PC-3 (cell line): ENCODE measurements at regions of chr7 and their contacts with region 1.

Region 1: DNA sequence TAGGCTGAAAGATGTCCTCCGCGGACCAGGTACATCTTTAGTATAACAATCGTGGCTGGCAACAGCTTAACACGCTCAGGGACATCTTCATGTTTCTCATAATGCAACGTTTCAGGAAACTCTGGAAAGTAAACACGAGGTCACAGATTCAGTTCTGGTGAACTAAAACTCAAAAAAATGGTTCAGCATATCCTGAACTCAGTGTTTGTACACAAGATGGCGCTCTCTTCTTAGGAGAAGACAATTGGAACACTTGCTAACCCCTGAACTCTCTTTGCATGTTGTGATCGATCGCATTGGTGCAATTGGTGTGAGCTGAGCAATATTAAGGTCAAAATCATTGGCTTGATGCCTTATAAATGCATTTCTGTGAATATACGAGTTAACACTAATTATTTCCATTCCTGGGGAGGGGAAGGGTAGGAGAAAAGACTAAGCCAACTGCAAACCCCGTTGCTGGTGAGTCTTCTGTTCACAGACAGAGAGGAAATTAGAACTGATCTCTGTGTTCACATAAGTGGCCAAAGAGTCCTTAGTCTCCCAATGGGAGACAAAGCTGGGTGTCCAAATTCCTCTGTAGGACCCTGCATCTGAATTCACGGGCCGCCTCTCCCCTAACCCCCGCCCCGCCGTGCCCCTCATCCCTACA is 52.6 kb upstream of the FAM180A start:
- DNase-seq: peak; percentile 80
- ATAC-seq: peak; percentile 64
- H3K4me3 ChIP-seq: 0 out of 2 replicates have a peak overlapping the region, but pooled peaks have one; percentile 6
- H3K27ac ChIP-seq: no peak overlapping the region
- H3K4me1 ChIP-seq: no peaks in the 10 kb centered on the region
- H3K27me3 ChIP-seq: no peaks in the 10 kb centered on the region
- CTCF ChIP-seq: peak; percentile 88

Region 2: DNA sequence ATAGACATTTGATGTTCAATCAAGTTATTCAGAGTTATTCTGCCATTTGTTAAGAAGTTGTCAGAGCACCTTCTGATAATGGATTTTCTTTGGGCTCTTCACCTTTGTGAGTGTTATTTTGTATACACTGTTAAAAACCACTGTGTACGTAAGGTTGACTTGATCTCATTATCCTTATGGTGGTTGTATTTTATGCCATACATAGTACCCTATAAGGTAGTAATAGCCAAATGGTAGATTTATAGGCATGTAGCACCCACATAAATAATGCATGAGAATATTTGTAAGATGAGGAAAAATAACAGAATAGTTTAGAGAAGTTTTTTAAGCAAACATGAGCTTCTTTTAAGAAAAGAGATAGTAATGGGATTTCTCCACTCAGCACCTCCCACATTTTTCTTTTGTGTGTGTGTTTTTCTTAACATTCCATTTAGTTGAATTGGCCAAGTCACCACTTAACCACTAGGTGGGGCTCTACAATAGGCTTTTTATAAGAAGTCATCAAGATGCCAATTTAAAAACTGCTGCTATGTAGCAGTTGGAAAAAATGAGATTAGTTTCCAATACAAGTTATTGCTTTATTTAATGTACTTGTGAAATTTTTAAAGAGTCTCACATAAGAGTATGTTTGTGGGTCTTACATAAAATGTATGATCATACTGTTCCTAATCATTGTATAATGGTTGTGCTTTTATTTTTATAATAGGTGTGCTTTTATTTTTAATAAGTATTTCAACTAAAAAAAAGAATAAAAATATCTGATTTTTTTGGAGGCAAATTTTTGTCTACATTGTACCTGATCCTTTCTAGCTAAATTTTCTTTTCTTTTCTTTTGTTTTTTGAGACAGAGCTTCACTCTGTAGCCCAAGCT is 180.0 kb before region 1 on chr7:
- CTCF ChIA-PET with region 1: no interaction called
- POLR2A ChIA-PET with region 1: no interaction called
- intact Hi-C with region 1: loop called (anchors 2 kb)
- DNase-seq: peak; percentile 89
- ATAC-seq: peak; percentile 90
- H3K4me3 ChIP-seq: no peak overlapping the region
- H3K27ac ChIP-seq: no peak overlapping the region
- H3K4me1 ChIP-seq: no peaks in the 10 kb centered on the region; the same call in 1 of the 2 replicates
- H3K27me3 ChIP-seq: no peaks in the 10 kb centered on the region
- CTCF ChIP-seq: peak; percentile 92

Region 3: DNA sequence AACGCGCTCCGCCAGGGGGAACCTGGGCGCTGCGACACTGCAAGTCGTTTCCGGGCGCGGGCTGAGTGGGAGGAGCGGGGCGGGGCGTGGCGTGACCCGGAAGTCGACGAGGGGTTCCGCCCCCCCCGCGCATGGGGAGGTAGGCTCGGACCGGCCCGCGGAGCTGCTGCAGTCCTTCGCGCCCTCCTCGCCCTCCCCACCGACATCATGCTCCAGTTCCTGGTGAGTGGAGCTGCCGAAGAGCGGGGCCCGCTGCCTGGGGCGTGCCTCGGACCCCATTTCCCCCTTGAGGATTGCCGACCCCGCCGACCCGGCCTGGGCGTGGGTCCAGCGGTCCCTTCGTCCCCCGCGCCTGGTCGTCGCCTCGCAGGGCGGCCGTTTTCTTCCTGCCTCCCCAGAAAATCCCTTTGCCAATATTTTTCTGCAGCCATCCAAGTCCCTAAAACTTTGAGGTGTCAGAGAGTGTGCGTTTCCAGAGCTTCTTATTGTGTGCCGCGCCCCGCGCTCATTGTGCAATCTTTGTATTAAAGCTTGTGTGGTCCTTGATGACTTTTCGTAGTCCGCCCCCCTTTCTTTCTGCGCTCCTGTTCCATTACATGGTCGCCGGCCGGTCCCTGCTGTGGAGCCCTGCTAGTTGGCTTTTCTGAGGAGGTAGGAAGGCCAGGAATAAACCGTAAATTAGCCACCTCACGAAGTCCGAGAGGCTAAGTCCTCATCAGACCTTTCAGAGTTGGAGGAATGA is 138.6 kb before region 1 on chr7 and contains the start of gene STMP1:
- CTCF ChIA-PET with region 1: no interaction called
- POLR2A ChIA-PET with region 1: no interaction called
- intact Hi-C with region 1: loop called (anchors 2 kb)
- DNase-seq: peak; percentile 92
- ATAC-seq: peak; percentile 87
- H3K4me3 ChIP-seq: peak within 1 kb of the TSS; percentile 81
- H3K27ac ChIP-seq: peak within 1 kb of the TSS; percentile 90
- H3K4me1 ChIP-seq: peaks cover 15% of the 10 kb centered on the region
- H3K27me3 ChIP-seq: no peaks in the 10 kb centered on the region
- CTCF ChIP-seq: peak; percentile 56
- total RNA-seq, gene STMP1: 7.1 and 8.8 TPM in 2 replicates

Region 4: GRCh38 chr7:135697276-135698049 is 103.7 kb before region 1 on chr7:
- CTCF ChIA-PET with region 1: no interaction called
- POLR2A ChIA-PET with region 1: no interaction called
- intact Hi-C with region 1: no loop called
- DNase-seq: no peak
- ATAC-seq: no peak
- H3K4me3 ChIP-seq: no peak overlapping the region
- H3K27ac ChIP-seq: no peak overlapping the region
- H3K4me1 ChIP-seq: no peaks in the 10 kb centered on the region; the same call in 1 of the 2 replicates
- H3K27me3 ChIP-seq: no peaks in the 10 kb centered on the region
- CTCF ChIP-seq: no peak

Region 5: DNA sequence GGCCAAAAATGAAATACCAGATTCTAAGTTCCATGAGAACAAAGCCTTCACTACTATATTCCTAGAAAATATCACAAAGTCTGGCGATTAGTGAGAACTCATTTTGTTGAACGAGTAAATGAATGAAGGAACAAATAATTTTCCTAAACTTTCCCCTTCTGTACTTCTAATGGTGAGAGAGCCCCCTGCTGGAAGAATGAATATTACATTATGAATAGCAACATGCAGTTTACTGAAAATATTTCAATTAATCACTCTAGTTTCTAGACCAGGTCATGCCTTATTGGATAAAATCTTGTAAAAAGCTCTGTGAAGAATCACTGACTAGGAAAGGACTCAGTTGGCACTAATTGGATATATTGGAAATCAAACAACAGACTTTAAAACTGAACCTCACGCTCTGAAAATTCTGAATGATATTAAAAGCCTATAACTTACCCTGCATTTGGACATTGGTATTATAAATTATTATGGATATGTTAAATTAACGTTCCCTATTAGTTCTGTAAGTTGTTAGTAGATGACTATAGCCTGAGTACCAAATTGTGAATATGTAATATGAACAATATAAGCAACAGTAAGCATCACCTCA is 208.4 kb after region 1 on chr7:
- CTCF ChIA-PET with region 1: interaction called, 5 read pairs
- POLR2A ChIA-PET with region 1: no interaction called
- intact Hi-C with region 1: loop called (anchors 1 kb)
- DNase-seq: peak; percentile 76
- ATAC-seq: 0 out of 2 replicates have a peak, but pooled peaks have one; percentile 37
- H3K4me3 ChIP-seq: no peak overlapping the region
- H3K27ac ChIP-seq: no peak overlapping the region
- H3K4me1 ChIP-seq: no peaks in the 10 kb centered on the region
- H3K27me3 ChIP-seq: peaks cover 23% of the 10 kb centered on the region
- CTCF ChIP-seq: peak; percentile 80

Region 6: DNA sequence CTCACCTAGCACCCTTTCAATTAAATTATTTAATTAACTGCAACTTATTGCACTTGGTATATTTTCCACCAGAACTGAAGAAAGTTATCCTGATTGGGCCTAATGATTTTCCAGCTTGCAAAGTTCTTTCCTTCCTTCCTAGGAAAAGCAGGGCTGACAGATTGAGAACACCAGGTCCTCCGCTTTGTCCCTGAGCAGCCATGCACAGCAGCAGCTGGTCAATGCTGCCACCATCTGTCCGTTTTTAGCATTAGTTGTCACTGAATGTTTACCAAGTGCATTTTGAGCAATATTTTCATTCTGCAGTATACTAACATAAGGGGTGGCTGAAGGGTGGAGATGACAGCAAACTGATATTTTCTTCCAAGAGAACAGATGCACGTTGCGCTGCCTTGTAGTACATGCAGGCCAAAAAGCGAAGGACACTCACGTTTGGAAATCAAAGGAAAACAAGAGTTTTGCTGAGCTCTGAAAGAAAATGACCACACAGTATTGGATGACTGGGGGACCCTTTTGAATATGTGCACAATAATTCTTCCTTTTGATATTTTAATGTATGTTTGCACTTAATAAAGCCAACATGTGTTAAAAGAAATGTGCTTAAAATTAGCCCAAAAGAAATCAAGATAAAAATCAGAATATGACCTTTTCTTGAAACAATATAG is 1791.2 kb after region 1 on chr7:
- CTCF ChIA-PET with region 1: no interaction called
- POLR2A ChIA-PET with region 1: no interaction called
- intact Hi-C with region 1: loop called (anchors 5 kb)
- DNase-seq: peak; percentile 85
- ATAC-seq: peak; percentile 93
- H3K4me3 ChIP-seq: no peak overlapping the region
- H3K27ac ChIP-seq: peak overlapping the region; percentile 61
- H3K4me1 ChIP-seq: peaks cover 12% of the 10 kb centered on the region
- H3K27me3 ChIP-seq: 0 out of 2 replicates have a peak, but pooled peaks cover 4% of the 10 kb centered on the region
- CTCF ChIP-seq: peak; percentile 87